Psoas muscle (tissue), 8 donors: ENCODE measurements at regions of chr5 and their contacts with region 1.

Region 1: DNA sequence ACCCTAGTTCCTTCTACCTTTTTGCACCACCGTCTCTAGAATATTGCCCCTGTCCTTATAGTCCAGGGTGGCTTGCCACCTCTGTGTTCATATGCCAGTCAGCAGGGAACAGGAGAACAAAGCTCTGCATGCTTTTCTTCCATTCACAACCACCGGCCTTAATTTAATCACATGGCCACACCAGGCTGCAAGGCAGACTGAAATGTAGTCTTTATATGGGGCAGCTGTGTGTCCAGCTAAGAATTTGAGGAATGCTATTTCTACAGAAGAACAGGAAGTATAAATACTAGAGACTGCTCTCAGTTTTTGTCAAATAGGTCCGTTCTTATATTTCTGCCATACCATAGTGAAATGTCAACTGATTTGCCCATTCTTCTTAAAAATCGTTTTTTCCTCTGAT is 5.8 kb downstream of the C5orf22 start:
- DNase-seq: no peak
- ATAC-seq: no peak
- H3K4me3 ChIP-seq: no peak overlapping the region
- H3K27ac ChIP-seq: no peak overlapping the region
- H3K4me1 ChIP-seq: peaks cover 11% of the 10 kb centered on the region
- H3K27me3 ChIP-seq: no peaks in the 10 kb centered on the region
- CTCF ChIP-seq: no peak

Region 2: DNA sequence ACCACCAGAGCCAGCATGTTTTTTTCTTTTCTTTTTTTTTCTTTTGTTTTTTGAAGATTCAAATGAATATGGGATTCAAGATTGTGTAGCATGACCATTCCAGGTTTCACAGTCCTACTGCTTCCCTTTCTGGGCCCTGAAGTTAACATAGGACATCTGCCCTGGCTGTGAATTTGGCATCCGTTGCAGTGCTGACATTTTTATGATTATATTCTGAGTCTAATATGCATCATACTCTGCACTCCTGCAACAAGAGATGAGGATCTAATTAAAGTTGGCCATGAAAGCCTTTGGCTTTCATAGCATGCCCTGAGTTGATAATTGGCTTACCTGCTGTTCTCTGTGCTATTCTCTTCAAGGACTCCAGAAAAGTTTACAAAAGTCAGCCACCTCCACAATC is 24.1 kb after region 1 on chr5:
- intact Hi-C with region 1: no loop called
- DNase-seq: no peak
- ATAC-seq: peak in 1 of 4 donors; percentile 48
- H3K4me3 ChIP-seq: no peak overlapping the region
- H3K27ac ChIP-seq: no peak overlapping the region
- H3K4me1 ChIP-seq: no peaks in the 10 kb centered on the region
- H3K27me3 ChIP-seq: no peaks in the 10 kb centered on the region
- CTCF ChIP-seq: no peak

Region 3: GRCh38 chr5:32390819-32391591 is 853.1 kb after region 1 on chr5:
- intact Hi-C with region 1: loop called in 1 of 2 experiments (anchors 10 kb)
- DNase-seq: no peak
- ATAC-seq: peak; percentile 62 to 90 (median 86)
- H3K4me3 ChIP-seq: no peak overlapping the region
- H3K27ac ChIP-seq: peak overlapping the region; percentile 32
- H3K4me1 ChIP-seq: no peaks in the 10 kb centered on the region
- H3K27me3 ChIP-seq: no peaks in the 10 kb centered on the region
- CTCF ChIP-seq: no peak